ENCODE measurements at regions of chr7 and their contacts with region 1.

Region 1: GRCh38 chr7:100469227-100470044 is 5.4 kb upstream of the SPACDR start:
- DNase-seq: peak; percentile 67 to 80
- ATAC-seq: peak; percentile 76 to 80
- H3K4me3 ChIP-seq: no peak overlapping the region
- H3K27ac ChIP-seq: peak overlapping the region in 1 of 4 donors; percentile 52
- H3K4me1 ChIP-seq: peaks cover 7 to 18% of the 10 kb centered on the region in 2 donors
- H3K27me3 ChIP-seq: no peaks in the 10 kb centered on the region
- CTCF ChIP-seq: peak; percentile 90 to 98 (median 95)
- POLR2A ChIP-seq: no peak

Region 2: GRCh38 chr7:100516135-100516812 is 46.8 kb after region 1 on chr7:
- in situ Hi-C with region 1: no loop called
- intact Hi-C with region 1: no loop called
- DNase-seq: peak; percentile 20 to 47
- ATAC-seq: peak; percentile 69 to 74
- H3K4me3 ChIP-seq: no peak overlapping the region
- H3K27ac ChIP-seq: no peak overlapping the region
- H3K4me1 ChIP-seq: no peaks in the 10 kb centered on the region
- H3K27me3 ChIP-seq: no peaks in the 10 kb centered on the region
- CTCF ChIP-seq: no peak
- POLR2A ChIP-seq: no peak

Region 3: DNA sequence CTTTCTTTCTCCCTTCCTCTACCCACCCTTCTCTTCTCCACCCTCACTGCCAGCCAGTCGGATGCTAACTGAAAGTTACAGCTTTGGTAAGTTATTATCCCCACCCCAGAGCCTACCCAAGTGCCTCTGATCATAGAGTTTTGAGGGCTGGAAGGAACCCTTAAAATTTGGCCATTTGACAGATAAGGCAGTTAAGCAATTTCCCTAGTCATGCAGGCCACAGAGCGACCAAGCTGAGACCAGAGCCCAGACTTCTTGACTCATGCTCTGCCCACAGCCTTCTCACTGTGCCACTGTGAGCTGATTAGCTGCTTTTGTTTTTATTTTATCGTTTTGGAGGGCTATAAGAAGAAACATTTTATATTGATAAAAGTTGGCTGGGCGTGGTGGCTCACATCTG is 87.1 kb after region 1 on chr7:
- in situ Hi-C with region 1: loop called in 3 of 4 experiments (anchors 5 to 25 kb)
- intact Hi-C with region 1: loop called (anchors 1 kb)
- DNase-seq: no peak
- ATAC-seq: no peak
- H3K4me3 ChIP-seq: no peak overlapping the region
- H3K27ac ChIP-seq: no peak overlapping the region
- H3K4me1 ChIP-seq: no peaks in the 10 kb centered on the region
- H3K27me3 ChIP-seq: no peaks in the 10 kb centered on the region
- CTCF ChIP-seq: no peak
- POLR2A ChIP-seq: no peak

Region 4: GRCh38 chr7:100726996-100727761 is 257.7 kb after region 1 on chr7:
- in situ Hi-C with region 1: loop called in 1 of 4 experiments (anchors 25 kb)
- intact Hi-C with region 1: loop called (anchors 5 kb)
- DNase-seq: no peak
- ATAC-seq: no peak
- H3K4me3 ChIP-seq: no peak overlapping the region
- H3K27ac ChIP-seq: no peak overlapping the region
- H3K4me1 ChIP-seq: no peaks in the 10 kb centered on the region
- H3K27me3 ChIP-seq: peaks cover 0 to 7% (median 4%) of the 10 kb centered on the region in 3 donors
- CTCF ChIP-seq: no peak
- POLR2A ChIP-seq: no peak

Measured in gastrocnemius medialis (tissue), 4 donors.